Dendritic cell treated with granulocyte-macrophage colony-stimulating factor and Interleukin-4, amounts not matched to agents 40 ng/mL and 50 ng/mL, for 4 days (primary cell): ENCODE measurements at regions of chr4 and their contacts with region 1.

Region 1: DNA sequence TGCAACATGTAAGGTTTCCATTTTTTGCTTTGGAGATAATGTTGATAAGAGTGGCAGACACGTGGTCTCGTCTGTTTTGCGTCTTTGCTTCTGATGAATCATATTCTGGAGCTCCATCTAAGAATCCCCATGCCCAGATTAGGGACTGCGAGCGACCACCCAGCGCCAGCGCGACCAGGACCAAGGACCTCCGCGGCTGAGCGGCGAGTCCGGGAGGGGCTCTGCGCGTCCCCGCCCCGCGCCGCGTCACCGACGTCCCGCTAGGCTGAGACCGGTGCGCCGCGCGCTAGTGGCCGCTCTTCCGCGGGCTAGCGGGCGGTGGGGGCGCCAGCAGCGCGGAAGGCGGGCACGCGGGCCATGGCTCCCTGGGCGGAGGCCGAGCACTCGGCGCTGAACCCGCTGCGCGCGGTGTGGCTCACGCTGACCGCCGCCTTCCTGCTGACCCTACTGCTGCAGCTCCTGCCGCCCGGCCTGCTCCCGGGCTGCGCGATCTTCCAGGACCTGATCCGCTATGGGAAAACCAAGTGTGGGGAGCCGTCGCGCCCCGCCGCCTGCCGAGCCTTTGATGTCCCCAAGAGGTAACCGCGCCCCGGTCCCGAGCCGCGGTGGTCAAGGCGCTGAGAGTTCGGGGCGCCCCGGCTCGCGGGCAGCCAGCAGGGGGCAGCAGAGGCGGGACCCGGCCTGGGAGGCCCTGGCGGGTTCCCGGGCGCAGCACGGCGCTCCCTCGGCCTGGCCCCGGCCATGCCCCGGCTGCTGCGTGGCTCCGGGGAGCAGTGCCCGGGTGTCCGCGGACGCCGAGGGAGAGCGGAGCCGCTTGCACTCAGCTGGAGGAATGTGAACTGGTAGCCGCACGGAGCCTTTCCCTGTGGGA is at the start of gene SRD5A3:
- H3K4me3 Mint-ChIP-seq: peak within 1 kb of the TSS; percentile 93
- H3K27ac Mint-ChIP-seq: peak within 1 kb of the TSS; percentile 93
- H3K4me1 Mint-ChIP-seq: peaks cover 16% of the 10 kb centered on the region
- H3K27me3 Mint-ChIP-seq: no peaks in the 10 kb centered on the region

Region 2: GRCh38 chr4:55395529-55396307 is 49.5 kb after region 1 on chr4 and contains the start of gene TMEM165:
- intact Hi-C with region 1: loop called (anchors 1 kb)
- H3K4me3 Mint-ChIP-seq: peak within 1 kb of the TSS; percentile 92
- H3K27ac Mint-ChIP-seq: peak within 1 kb of the TSS; percentile 96
- H3K4me1 Mint-ChIP-seq: peaks cover 38% of the 10 kb centered on the region
- H3K27me3 Mint-ChIP-seq: no peaks in the 10 kb centered on the region

Region 3: GRCh38 chr4:55574252-55574651 is 228.0 kb after region 1 on chr4:
- intact Hi-C with region 1: no loop called
- H3K4me3 Mint-ChIP-seq: no peak overlapping the region
- H3K27ac Mint-ChIP-seq: no peak overlapping the region
- H3K4me1 Mint-ChIP-seq: peaks cover 11% of the 10 kb centered on the region
- H3K27me3 Mint-ChIP-seq: no peaks in the 10 kb centered on the region

Region 4: DNA sequence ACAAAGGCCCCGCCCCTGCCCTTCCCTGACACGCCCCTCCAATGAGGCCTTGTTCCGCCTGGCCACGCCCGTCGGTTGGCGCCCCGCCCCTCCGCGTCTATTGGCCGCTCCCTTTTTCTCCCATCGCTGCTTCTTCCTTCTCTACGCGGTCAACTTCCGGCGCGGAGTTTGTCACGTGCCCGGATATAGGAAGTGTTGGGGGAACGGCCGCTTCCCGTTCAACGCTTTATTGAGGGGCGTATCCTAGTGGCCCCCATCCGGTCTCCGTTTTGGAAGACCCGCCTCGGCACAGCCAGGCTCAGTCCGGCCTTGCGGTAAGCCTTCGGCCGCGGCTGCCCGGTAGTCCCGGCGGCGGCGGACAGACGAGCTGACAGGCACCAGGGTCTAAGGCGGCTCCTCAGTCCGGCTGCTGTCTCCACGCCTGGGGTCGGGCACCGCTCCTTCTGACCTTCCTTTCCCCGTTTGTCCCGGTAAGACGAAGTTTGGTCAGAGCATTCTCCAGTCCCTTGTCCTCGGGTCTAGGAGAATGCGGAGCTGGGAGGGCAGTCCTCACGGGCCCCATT is 507.4 kb after region 1 on chr4 and contains the start of gene EXOC1:
- intact Hi-C with region 1: loop called (anchors 2 kb)
- H3K4me3 Mint-ChIP-seq: no peak within 1 kb of the TSS
- H3K27ac Mint-ChIP-seq: peak within 1 kb of the TSS; percentile 94
- H3K4me1 Mint-ChIP-seq: no peaks in the 10 kb centered on the region
- H3K27me3 Mint-ChIP-seq: peaks cover 8% of the 10 kb centered on the region